ENCODE measurements at regions of chr5 and their contacts with region 1.

Region 1: GRCh38 chr5:168679515-168679920 is 100.3 kb upstream of the PANK3 start:
- DNase-seq: peak; percentile 79
- H3K4me3 ChIP-seq: no peak overlapping the region
- H3K27ac ChIP-seq: no peak overlapping the region
- H3K4me1 ChIP-seq: peaks cover 0 to 25% (median 6%) of the 10 kb centered on the region in 4 donors
- H3K27me3 ChIP-seq: no peaks in the 10 kb centered on the region
- CTCF ChIP-seq: peak; percentile 82 to 94 (median 88)
- EP300 ChIP-seq: no peak
- POLR2A ChIP-seq: no peak

Region 2: DNA sequence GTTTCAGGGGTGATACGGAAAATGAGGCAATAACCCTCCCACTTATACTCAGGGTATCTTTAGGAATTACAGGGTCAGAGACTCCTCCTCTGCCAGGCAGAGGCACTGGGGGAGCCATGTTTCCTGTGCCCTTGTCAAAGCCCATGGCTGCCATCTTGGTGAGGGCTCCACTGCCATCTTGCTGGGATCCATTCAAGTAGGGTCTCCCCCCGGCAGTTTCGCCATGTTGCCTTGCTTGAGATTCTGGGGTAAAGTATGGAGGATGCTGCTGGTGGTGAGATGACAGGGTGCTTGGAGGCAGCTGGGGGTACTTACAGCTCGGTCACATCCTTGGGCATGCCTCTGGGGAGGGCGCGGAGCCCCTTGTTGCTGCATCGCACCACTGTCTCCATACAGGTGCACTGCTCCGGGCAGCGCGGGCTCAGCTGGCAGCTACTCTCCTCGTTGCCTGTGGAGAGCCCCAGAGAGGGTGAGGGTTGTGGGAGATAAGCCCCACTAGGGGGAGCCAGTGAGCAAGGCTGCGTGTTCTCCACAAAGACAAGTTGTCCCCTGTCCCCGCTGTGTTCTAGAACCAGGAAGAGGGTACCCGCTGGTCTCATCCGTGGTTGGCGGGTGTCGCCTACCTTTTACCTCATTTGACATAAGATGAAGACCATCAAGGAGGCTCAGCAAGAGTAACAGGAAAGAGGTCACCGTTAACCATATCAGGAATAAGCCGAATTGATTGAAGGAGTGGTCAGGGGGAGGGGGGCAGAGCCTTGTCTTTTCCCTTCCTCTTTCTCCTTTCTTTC is 68.7 kb after region 1 on chr5:
- in situ Hi-C with region 1: no loop called
- intact Hi-C with region 1: no loop called
- DNase-seq: peak; percentile 24
- H3K4me3 ChIP-seq: no peak overlapping the region
- H3K27ac ChIP-seq: no peak overlapping the region
- H3K4me1 ChIP-seq: no peaks in the 10 kb centered on the region
- H3K27me3 ChIP-seq: no peaks in the 10 kb centered on the region
- CTCF ChIP-seq: peak in 3 of 5 experiments; percentile 19 to 59 (median 39)
- EP300 ChIP-seq: no peak
- POLR2A ChIP-seq: no peak

Region 3: DNA sequence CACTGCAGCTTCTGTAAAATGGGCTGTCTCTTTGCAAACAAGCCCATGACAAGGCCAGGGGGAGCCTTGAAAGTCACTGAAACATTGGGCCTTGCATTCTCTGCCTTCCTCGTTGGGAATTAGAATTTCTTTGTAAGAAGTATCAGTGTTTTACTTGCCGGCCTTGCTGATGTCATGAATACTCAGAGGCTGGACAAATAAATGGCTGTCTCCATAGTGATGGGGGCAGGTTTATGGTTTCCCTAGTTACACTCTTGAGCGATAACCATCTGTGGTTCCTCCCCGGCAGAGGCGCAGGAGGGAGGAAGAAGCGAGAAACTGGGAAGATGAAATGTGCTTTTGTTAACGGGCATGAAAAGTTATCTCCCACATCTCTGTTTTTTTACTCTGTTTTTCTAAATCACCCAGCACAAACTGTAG is 172.4 kb after region 1 on chr5:
- in situ Hi-C with region 1: no loop called
- intact Hi-C with region 1: no loop called
- DNase-seq: no peak
- H3K4me3 ChIP-seq: no peak overlapping the region
- H3K27ac ChIP-seq: no peak overlapping the region
- H3K4me1 ChIP-seq: no peaks in the 10 kb centered on the region
- H3K27me3 ChIP-seq: no peaks in the 10 kb centered on the region
- CTCF ChIP-seq: no peak
- EP300 ChIP-seq: no peak
- POLR2A ChIP-seq: no peak

Region 4: DNA sequence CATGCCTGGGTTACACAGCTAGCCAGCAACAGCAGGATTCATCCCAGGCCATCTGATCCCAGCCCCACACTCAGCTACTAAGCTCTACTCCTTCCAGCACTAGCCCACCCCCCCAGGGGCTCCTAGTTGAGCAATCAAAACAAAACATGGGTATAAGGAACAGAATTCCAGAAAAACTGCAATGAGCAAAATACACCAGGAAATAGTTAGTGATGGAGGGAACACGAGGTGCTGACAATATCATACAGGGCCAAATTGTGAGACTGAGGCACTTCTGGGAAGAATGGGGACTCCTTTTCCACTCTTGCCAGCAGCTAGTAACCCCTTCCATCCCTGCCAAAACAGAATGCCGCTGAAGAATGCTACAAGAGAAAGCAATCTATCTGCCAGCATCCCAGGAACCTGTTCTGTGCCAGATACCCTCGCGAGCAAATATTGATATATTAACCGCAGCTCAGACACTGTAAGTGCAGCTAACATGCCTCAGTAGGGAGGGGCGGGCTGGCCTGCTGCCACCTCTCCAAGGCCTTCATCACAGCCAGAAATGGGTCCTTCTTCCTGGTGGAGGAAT is 460.0 kb after region 1 on chr5:
- in situ Hi-C with region 1: no loop called
- intact Hi-C with region 1: loop called (anchors 10 kb)
- DNase-seq: peak; percentile 77
- H3K4me3 ChIP-seq: no peak overlapping the region
- H3K27ac ChIP-seq: no peak overlapping the region
- H3K4me1 ChIP-seq: peaks cover 0 to 5% (median 4%) of the 10 kb centered on the region in 4 donors
- H3K27me3 ChIP-seq: no peaks in the 10 kb centered on the region
- CTCF ChIP-seq: no peak
- EP300 ChIP-seq: no peak
- POLR2A ChIP-seq: no peak

Region 5: DNA sequence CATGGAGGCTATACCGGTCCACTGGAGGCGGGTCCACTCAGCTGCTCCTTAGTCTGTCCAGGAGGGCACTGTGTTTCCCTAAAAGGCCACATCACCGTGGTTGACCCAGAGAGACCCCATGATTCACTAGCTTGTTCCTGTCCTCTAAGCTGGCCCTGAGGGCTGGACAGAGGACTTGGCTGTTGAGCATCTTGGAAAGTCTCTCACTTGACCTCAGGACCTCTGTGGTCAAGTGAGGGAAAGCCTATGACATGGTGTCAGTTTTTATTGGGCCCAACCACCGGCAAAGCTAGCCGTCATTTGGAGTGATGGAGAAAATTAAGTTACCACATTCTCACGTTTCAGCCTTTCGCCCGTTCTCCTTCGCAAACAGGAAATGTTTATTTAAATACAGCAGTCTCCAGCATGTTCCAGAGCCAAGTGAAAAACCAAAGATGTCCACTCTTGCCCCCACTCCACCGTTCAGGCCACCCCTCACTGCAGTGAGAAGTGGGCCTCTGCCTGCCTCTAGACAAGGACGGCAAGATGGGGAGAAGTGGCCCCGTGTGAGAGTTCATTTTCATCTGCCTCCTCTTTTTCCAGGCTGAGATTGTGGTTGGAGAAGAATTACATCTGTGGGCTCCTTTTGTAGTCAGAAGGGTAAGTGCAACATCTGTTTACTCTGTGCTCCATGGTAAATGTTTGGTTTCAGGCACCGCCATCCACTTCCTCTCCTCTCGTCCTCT is 617.1 kb after region 1 on chr5:
- in situ Hi-C with region 1: loop called in 1 of 4 experiments (anchors 25 kb)
- intact Hi-C with region 1: loop called (anchors 10 kb)
- DNase-seq: peak; percentile 12
- H3K4me3 ChIP-seq: no peak overlapping the region
- H3K27ac ChIP-seq: peak overlapping the region; percentile 21 to 64 (median 47)
- H3K4me1 ChIP-seq: peaks cover 0 to 10% (median 3%) of the 10 kb centered on the region in 4 donors
- H3K27me3 ChIP-seq: peaks cover 28% of the 10 kb centered on the region
- CTCF ChIP-seq: no peak
- EP300 ChIP-seq: no peak
- POLR2A ChIP-seq: no peak

Region 6: GRCh38 chr5:169302491-169303118 is 623.1 kb after region 1 on chr5:
- in situ Hi-C with region 1: loop called in 1 of 4 experiments (anchors 25 kb)
- intact Hi-C with region 1: loop called (anchors 10 kb)
- DNase-seq: peak; percentile 71
- H3K4me3 ChIP-seq: no peak overlapping the region
- H3K27ac ChIP-seq: peak overlapping the region in 1 of 4 donors; percentile 79
- H3K4me1 ChIP-seq: peaks cover 0 to 15% (median 5%) of the 10 kb centered on the region in 4 donors
- H3K27me3 ChIP-seq: peaks cover 54% of the 10 kb centered on the region
- CTCF ChIP-seq: peak; percentile 78 to 91 (median 87)
- EP300 ChIP-seq: no peak
- POLR2A ChIP-seq: no peak

Region 7: DNA sequence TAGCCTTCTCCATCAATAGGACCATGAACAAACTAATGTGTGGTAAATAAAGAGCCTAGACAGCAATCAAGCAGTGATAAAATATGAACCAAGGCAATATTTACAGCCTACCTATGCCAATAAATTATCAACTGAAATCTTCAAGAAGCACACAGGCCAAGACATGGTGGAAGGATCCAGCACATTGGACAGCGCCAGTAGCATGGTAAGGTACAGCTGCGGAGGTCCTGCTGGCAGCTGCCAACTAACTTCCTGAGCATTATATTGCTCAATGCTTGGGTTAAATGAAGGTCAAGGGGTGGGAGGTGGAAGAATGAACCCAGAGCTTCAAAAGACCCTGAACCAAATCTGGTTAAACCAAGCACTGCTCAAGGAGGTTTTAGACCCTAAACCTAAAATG is 887.6 kb after region 1 on chr5:
- in situ Hi-C with region 1: loop called in 2 of 4 experiments (anchors 25 kb)
- intact Hi-C with region 1: no loop called
- DNase-seq: no peak
- H3K4me3 ChIP-seq: no peak overlapping the region
- H3K27ac ChIP-seq: no peak overlapping the region
- H3K4me1 ChIP-seq: no peaks in the 10 kb centered on the region
- H3K27me3 ChIP-seq: peaks cover 15% of the 10 kb centered on the region
- CTCF ChIP-seq: no peak
- EP300 ChIP-seq: no peak
- POLR2A ChIP-seq: no peak

Region 8: DNA sequence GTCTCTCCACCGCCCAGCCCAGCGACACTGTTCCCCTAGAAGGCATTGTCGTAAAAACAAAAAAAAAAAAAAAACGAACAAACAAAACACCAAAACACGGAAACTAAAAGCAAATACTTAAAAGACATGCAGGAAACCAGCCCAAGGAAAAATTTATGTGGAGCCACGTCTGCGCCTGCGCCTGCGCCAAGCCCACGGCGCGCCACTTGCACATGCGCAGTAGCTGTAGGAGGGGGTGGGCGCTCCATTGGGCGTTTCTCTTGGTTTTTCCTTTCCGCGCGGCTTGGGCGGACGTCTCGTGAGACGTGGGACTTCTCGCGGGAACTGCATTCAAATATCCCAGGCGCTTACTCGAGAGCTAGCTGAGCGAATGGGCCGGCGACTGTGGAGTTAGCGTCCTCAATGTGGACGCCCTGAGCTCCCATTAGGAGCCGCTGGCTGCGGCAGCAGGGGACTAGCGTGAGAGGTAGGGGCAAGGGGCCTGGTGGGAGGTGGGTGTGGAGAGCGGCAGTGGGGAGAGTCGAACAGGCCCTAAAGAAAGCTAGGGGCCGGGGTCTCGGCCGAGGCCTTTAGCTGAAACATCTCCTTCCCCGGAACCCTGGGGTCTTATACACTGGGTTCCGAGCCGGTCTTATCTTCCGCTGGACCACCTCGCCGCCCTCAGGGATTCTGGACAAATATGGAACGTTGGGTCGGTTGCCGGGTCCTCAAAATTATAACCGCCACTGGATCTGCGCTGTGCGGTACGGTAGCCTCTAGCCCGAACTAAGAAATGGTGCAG is 904.1 kb after region 1 on chr5 and contains the start of gene SPDL1:
- in situ Hi-C with region 1: loop called in 2 of 4 experiments (anchors 10 to 25 kb)
- intact Hi-C with region 1: loop called (anchors 2 kb)
- DNase-seq: peak; percentile 97
- H3K4me3 ChIP-seq: peak within 1 kb of the TSS; percentile 61 to 92 (median 80)
- H3K27ac ChIP-seq: peak within 1 kb of the TSS; percentile 82 to 85 (median 82)
- H3K4me1 ChIP-seq: peaks cover 6 to 15% (median 9%) of the 10 kb centered on the region in 4 donors
- H3K27me3 ChIP-seq: no peaks in the 10 kb centered on the region
- CTCF ChIP-seq: no peak
- EP300 ChIP-seq: no peak
- POLR2A ChIP-seq: peak; percentile 48
- total RNA-seq, gene SPDL1: 1.5 to 23.7 (median 8.8) TPM

Measured in transverse colon (tissue), 4 donors.